Heart right ventricle (tissue), 16 donors: ENCODE measurements at regions of chr3 and their contacts with region 1.

Region 1: DNA sequence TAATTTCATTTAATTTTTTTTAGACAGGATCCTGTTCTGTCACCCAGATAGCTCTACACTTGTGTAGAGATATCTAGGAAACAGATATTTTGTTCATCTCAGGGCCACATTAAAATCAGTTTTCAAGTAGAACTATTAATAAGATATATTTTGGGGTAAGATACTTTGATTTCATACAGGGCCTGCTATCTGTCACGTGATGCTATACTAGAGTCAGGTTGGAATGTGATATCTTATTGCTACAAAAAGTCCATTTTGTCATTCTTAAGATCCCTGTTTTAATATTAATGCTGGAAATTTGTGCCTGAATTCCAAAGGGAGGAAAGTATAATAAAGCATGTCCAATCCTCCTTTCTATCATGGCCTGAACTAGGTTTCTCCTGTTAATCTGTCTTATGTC is 426.6 kb downstream of the PLOD2 start:
- DNase-seq: no peak
- ATAC-seq: no peak
- H3K4me3 ChIP-seq: no peak overlapping the region
- H3K27ac ChIP-seq: no peak overlapping the region
- H3K4me1 ChIP-seq: no peaks in the 10 kb centered on the region
- H3K27me3 ChIP-seq: no peaks in the 10 kb centered on the region
- CTCF ChIP-seq: no peak

Region 2: DNA sequence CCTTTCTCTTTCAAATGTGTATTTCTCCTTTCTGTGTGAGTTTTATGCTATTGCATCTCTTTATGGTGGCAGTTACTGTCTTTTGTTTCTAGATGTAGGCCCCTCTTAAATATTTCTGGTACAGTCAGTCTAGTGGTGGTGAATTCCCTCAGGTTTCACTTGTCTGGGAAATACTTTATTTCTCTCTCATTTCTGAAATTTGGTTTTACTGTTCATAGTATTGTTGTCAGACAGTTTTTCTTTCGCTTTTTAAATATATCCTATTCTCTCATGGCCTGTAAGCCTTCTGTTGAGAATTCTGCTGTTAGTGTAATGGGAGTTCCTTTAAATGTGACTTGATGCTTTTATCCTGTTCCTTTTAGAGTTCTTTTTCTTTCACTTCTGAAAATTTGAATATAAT is 447.5 kb before region 1 on chr3:
- intact Hi-C with region 1: loop called in 1 of 10 experiments (anchors 5 kb)
- DNase-seq: no peak
- ATAC-seq: no peak
- H3K4me3 ChIP-seq: no peak overlapping the region
- H3K27ac ChIP-seq: no peak overlapping the region
- H3K4me1 ChIP-seq: no peaks in the 10 kb centered on the region
- H3K27me3 ChIP-seq: no peaks in the 10 kb centered on the region
- CTCF ChIP-seq: no peak

Region 3: GRCh38 chr3:146865175-146865755 is 1130.8 kb after region 1 on chr3:
- intact Hi-C with region 1: no loop called
- DNase-seq: no peak
- ATAC-seq: no peak
- H3K4me3 ChIP-seq: no peak overlapping the region
- H3K27ac ChIP-seq: no peak overlapping the region
- H3K4me1 ChIP-seq: peaks cover 0 to 7% (median 0%) of the 10 kb centered on the region in 9 donors
- H3K27me3 ChIP-seq: no peaks in the 10 kb centered on the region
- CTCF ChIP-seq: no peak